Mammary epithelial cell (primary cell): ENCODE measurements at regions of chr19 and their contacts with region 1.

Region 1: DNA sequence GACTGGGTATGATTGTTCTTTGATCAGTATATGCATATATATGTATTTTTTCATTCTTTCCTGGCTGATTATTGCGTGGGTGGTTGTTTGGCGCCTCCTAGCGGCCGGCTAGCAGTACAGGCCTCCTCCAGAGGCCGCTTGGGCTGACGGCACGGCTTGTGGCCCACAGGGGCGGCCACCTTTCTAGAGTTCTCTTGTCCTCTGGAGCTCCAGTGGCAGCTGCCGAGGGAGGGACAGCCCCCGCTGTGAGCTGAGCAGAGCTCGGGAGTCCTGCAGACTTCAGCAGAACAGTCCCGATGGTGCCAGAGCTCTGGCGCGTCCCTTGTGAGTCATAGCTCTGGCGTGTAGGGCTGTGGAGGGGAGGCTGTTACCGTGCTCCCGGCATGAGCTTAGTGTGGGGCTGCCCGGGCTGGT is 22.5 kb upstream of the ZNF429 start:
- DNase-seq: no peak
- H3K4me3 ChIP-seq: no peak overlapping the region
- H3K27ac ChIP-seq: no peak overlapping the region
- H3K4me1 ChIP-seq: no peaks in the 10 kb centered on the region
- H3K27me3 ChIP-seq: no peaks in the 10 kb centered on the region
- CTCF ChIP-seq: peak; percentile 14 to 33

Region 2: DNA sequence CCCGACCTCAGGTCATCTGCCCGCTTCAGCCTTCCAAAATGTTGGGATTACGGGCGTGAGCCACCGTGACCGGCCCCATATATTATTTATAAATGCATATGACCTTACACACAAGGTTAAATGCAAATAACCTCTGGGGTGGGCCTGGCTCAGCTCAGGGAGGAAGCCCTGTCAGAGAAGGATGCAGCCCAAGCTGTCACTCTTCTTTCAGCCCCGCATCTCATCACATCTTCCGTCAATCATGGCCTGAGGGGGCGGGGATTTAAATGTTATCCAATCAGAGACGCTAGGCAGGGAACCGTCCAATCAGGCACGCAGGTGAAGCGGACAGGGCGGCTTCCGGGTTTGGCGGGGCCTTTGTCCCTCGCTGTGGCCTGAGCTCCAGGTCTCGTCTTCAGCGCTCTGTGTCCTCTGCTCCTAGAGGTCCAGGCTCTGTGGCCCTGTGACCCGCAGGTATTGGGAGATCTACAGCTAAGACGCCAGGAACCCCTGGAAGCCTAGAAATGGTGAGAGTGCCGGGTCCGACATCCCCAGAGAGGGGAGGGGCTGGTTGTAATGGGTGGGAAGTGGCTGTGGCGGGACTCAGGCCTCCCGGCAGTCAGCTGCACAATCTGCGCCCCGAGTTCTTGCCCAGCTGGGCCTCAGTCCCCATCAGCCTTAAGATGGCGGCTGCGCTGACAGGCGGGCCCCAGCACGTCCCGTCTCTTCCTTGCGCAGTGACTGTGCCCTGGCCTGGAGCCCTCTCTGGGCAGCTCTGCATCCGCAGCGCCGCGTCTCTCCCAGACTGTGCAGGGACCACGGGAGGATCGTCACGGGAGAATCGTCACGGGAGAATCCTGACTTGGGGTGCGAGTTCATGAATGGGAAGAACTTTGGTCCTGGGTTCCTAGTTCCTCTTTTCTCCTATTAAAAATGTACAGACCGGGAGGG is 462.3 kb before region 1 on chr19 and contains the start of gene ZNF430:
- CTCF ChIA-PET with region 1: no interaction called
- dilution Hi-C with region 1: no loop called
- in situ Hi-C with region 1: no loop called
- intact Hi-C with region 1: loop called (anchors 10 kb)
- DNase-seq: peak; percentile 94
- H3K4me3 ChIP-seq: peak within 1 kb of the TSS; percentile 70 to 89 (median 75)
- H3K27ac ChIP-seq: peak within 1 kb of the TSS; percentile 98
- H3K4me1 ChIP-seq: peaks cover 22% of the 10 kb centered on the region
- H3K27me3 ChIP-seq: no peaks in the 10 kb centered on the region
- CTCF ChIP-seq: no peak
- total RNA-seq, gene ZNF430: 14.1 to 19.3 TPM

Region 3: DNA sequence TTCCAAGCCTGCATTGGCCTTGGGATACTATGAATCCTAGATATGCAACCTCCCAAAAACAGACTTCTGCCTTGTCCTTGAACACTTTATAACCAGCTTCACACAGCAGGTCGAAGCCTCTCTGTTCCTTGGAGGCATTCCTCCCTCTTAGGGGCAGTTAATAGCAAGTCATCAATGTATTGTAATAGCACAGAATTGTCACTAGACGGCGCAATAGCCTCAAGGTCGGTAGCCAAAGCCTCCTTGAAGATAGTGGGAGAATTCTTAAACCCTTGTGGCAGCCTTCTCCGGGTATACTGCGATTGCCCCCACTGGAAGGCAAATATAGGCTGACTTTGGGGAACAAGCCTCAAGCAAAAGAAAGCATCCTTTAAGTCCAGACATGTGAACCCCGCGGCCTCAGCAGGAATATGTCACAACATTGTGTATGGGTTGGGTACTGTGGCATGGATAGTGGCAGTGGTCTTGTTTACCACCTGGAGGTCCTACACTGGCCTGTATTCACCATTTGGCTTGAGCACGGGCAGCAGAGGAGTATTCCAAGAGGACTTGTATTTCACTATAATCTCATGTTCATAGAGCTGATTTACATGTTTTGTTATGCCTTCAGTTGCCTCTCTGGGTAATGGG is 279.9 kb before region 1 on chr19:
- CTCF ChIA-PET with region 1: no interaction called
- dilution Hi-C with region 1: no loop called
- in situ Hi-C with region 1: no loop called
- intact Hi-C with region 1: loop called (anchors 1 kb)
- DNase-seq: peak; percentile 38
- H3K4me3 ChIP-seq: no peak overlapping the region
- H3K27ac ChIP-seq: no peak overlapping the region
- H3K4me1 ChIP-seq: no peaks in the 10 kb centered on the region
- H3K27me3 ChIP-seq: no peaks in the 10 kb centered on the region
- CTCF ChIP-seq: peak; percentile 50 to 87

Region 4: GRCh38 chr19:21256722-21257121 is 226.1 kb before region 1 on chr19:
- CTCF ChIA-PET with region 1: no interaction called
- dilution Hi-C with region 1: no loop called
- in situ Hi-C with region 1: no loop called
- intact Hi-C with region 1: loop called (anchors 2 kb)
- DNase-seq: peak; percentile 43
- H3K4me3 ChIP-seq: no peak overlapping the region
- H3K27ac ChIP-seq: no peak overlapping the region
- H3K4me1 ChIP-seq: no peaks in the 10 kb centered on the region
- H3K27me3 ChIP-seq: no peaks in the 10 kb centered on the region
- CTCF ChIP-seq: peak; percentile 33 to 72

Region 5: DNA sequence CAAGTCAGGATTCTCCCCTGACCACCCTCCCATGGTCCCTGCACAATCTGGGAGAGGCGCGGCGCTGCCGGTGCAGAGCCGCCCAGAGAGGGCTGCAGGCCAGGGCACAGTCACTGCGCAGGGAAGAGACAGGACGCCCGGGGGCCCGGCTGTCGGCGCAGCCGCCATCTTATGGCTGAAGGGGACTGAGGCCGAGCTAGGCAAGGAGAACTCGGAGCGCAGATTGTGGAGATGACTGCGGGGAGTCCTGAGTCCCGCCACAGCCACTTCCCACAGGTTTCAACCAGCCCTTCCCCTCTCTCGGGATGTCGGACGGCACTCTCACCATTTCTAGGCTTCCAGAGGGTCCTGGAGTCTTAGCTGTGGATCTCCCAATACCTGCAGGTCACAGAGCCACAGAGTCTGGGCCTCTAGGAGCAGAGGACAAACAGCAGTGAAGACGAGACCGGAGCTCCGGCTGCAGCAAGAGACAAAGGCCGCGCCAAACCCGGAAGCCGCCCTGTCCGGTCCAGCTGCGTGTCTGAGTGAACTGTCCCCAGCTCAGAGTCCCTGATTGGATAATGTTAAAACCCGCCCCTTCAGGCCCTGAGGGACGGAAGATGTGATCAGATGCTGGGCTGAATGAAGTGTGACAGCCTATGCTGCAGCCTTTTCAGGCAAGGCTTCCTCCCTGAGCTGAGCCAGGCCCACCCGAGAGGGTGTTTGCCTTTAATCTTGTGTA is 153.8 kb before region 1 on chr19 and contains the start of gene ZNF708:
- CTCF ChIA-PET with region 1: no interaction called
- dilution Hi-C with region 1: no loop called
- in situ Hi-C with region 1: no loop called
- intact Hi-C with region 1: no loop called
- DNase-seq: peak; percentile 90
- H3K4me3 ChIP-seq: peak within 1 kb of the TSS; percentile 62 to 87 (median 81)
- H3K27ac ChIP-seq: peak within 1 kb of the TSS; percentile 86
- H3K4me1 ChIP-seq: peaks cover 5% of the 10 kb centered on the region
- H3K27me3 ChIP-seq: no peaks in the 10 kb centered on the region
- CTCF ChIP-seq: no peak
- total RNA-seq, gene ZNF708: 9.2 to 15.3 TPM

Region 6: GRCh38 chr19:22882792-22883191 is 1399.9 kb after region 1 on chr19:
- CTCF ChIA-PET with region 1: interaction called, 18 read pairs
- dilution Hi-C with region 1: no loop called
- in situ Hi-C with region 1: no loop called
- intact Hi-C with region 1: no loop called
- DNase-seq: peak; percentile 17
- H3K4me3 ChIP-seq: no peak overlapping the region
- H3K27ac ChIP-seq: no peak overlapping the region
- H3K4me1 ChIP-seq: no peaks in the 10 kb centered on the region
- H3K27me3 ChIP-seq: no peaks in the 10 kb centered on the region
- CTCF ChIP-seq: peak in 1 of 2 donors; percentile 35